ENCODE measurements at regions of chr3 and their contacts with region 1.

Region 1: DNA sequence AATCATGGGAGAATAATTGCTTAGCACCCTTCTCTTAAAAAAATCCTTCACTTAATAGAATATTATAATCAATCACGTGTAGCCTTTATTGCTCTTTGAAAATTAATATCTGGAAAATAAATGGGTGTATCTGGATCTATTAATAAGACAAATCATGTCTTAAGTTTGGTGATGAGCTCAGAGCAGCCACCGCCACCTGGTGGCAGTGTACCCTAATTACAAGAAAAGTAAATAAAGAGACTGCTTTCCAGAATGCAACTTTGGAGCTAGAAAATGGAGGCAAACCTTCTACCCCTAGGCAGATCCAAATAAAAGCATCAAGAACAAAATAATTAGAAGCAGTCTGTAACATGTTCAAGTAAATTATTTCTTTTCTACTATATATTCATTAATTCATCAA is 43.5 kb downstream of the EPHB1 start:
- DNase-seq: no peak
- ATAC-seq: no peak
- H3K4me3 ChIP-seq: no peak overlapping the region
- H3K27ac ChIP-seq: no peak overlapping the region
- H3K4me1 ChIP-seq: peaks cover 10% of the 10 kb centered on the region
- H3K27me3 ChIP-seq: no peaks in the 10 kb centered on the region
- CTCF ChIP-seq: peak; percentile 4 to 44 (median 38); a peak in 4 of 6 replicates
- EP300 ChIP-seq: no peak
- POLR2A ChIP-seq: no peak
- RAD21 ChIP-seq: no peak

Region 2: DNA sequence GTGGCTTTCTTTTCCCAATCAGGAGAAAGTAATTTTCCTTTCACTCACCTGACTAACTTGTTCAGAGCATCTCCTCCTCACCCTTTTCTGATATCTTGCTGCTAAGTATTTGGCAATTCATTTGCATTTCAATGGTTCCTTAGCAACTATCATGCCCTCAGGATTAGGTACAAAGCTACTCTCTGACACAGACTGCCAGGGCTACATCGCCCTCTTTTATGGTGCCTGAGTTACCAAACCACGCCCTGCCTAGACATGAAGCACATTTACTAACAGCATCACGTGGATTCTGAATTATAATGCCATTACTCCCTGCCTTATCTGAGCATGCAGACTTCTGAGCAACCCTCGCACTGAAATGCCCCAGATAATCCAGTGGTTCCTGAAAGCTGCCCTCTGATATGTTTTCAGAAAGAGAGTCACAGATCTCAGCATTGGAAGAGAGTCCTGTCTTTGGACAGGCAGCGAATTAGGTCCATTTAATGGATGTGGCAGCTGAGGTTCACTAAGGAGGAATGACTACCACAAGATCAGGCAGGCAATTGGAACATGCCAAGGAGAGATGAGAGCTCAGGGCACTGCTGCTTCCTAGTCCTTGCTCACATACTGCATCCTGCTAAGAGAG is 29.1 kb before region 1 on chr3:
- CTCF ChIA-PET with region 1: no interaction called
- POLR2A ChIA-PET with region 1: interaction called, 3 read pairs
- RAD21 ChIA-PET with region 1: interaction called, 5 read pairs
- SMC1A ChIA-PET with region 1: interaction called, 17 read pairs
- in situ Hi-C with region 1: no loop called
- intact Hi-C with region 1: no loop called
- DNase-seq: no peak
- ATAC-seq: peak; percentile 37
- H3K4me3 ChIP-seq: no peak overlapping the region
- H3K27ac ChIP-seq: no peak overlapping the region
- H3K4me1 ChIP-seq: peaks cover 15% of the 10 kb centered on the region
- H3K27me3 ChIP-seq: no peaks in the 10 kb centered on the region
- CTCF ChIP-seq: no peak
- EP300 ChIP-seq: no peak
- POLR2A ChIP-seq: no peak
- RAD21 ChIP-seq: no peak

Region 3: GRCh38 chr3:134852893-134853351 is 14.3 kb after region 1 on chr3:
- CTCF ChIA-PET with region 1: interaction called, 18 read pairs
- POLR2A ChIA-PET with region 1: interaction called, 3 read pairs
- RAD21 ChIA-PET with region 1: interaction called, 9 read pairs
- SMC1A ChIA-PET with region 1: interaction called, 8 read pairs
- in situ Hi-C with region 1: no loop called
- intact Hi-C with region 1: no loop called
- DNase-seq: peak; percentile 91
- ATAC-seq: peak; percentile 96
- H3K4me3 ChIP-seq: no peak overlapping the region
- H3K27ac ChIP-seq: peak overlapping the region; percentile 68
- H3K4me1 ChIP-seq: peaks cover 36% of the 10 kb centered on the region
- H3K27me3 ChIP-seq: no peaks in the 10 kb centered on the region
- CTCF ChIP-seq: peak in 2 of 3 experiments; percentile 25 to 32; a peak in 2 of 6 replicates
- EP300 ChIP-seq: peak; percentile 56 to 69; a peak in 2 of 4 replicates
- POLR2A ChIP-seq: peak; percentile 56; the same call in 1 of the 2 replicates
- RAD21 ChIP-seq: peak; percentile 39

Region 4: DNA sequence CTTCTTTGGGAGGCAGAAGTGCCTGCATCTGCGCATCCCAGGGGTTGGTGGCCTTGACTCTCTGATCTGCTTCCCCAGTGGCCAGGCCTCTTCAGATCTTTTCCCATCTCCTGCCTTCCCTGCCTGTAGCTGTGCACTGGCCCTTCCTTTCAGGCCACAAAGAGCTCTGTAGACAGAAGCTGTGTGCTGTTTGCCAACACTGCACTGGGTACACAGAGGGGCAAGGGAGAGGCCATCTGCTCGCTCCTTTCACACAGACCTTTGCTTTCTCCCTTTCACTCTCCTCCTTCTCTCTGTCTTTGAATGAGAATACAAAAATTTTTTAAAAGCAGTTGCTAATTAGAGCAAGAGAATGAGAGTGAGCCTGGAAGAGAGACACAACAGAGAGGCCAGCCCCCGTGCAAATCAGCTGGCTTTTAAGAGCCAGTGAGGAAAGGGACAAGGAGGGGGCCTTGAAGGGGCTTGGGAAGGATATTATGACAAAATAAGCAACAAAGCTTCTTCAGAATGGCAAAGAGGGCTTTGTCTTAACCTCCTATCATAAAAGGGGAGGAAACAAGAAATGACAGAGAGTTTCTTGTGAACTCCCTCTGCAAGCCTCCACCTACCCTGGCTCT is 127.4 kb after region 1 on chr3:
- CTCF ChIA-PET with region 1: no interaction called
- POLR2A ChIA-PET with region 1: no interaction called
- RAD21 ChIA-PET with region 1: no interaction called
- SMC1A ChIA-PET with region 1: no interaction called
- in situ Hi-C with region 1: no loop called
- intact Hi-C with region 1: no loop called
- DNase-seq: no peak
- ATAC-seq: no peak
- H3K4me3 ChIP-seq: no peak overlapping the region
- H3K27ac ChIP-seq: no peak overlapping the region
- H3K4me1 ChIP-seq: no peaks in the 10 kb centered on the region
- H3K27me3 ChIP-seq: no peaks in the 10 kb centered on the region
- CTCF ChIP-seq: no peak
- EP300 ChIP-seq: no peak
- POLR2A ChIP-seq: no peak
- RAD21 ChIP-seq: no peak

Region 5: GRCh38 chr3:135056084-135056730 is 217.6 kb after region 1 on chr3:
- CTCF ChIA-PET with region 1: no interaction called
- POLR2A ChIA-PET with region 1: no interaction called
- RAD21 ChIA-PET with region 1: no interaction called
- SMC1A ChIA-PET with region 1: no interaction called
- in situ Hi-C with region 1: no loop called
- intact Hi-C with region 1: no loop called
- DNase-seq: no peak
- ATAC-seq: no peak
- H3K4me3 ChIP-seq: no peak overlapping the region
- H3K27ac ChIP-seq: no peak overlapping the region
- H3K4me1 ChIP-seq: no peaks in the 10 kb centered on the region
- H3K27me3 ChIP-seq: no peaks in the 10 kb centered on the region
- CTCF ChIP-seq: no peak
- EP300 ChIP-seq: no peak
- POLR2A ChIP-seq: no peak
- RAD21 ChIP-seq: no peak

Measured in GM12878 (cell line).